CD4-positive, alpha-beta memory T cell (primary cell): ENCODE measurements at regions of chr11 and their contacts with region 1.

Region 1: DNA sequence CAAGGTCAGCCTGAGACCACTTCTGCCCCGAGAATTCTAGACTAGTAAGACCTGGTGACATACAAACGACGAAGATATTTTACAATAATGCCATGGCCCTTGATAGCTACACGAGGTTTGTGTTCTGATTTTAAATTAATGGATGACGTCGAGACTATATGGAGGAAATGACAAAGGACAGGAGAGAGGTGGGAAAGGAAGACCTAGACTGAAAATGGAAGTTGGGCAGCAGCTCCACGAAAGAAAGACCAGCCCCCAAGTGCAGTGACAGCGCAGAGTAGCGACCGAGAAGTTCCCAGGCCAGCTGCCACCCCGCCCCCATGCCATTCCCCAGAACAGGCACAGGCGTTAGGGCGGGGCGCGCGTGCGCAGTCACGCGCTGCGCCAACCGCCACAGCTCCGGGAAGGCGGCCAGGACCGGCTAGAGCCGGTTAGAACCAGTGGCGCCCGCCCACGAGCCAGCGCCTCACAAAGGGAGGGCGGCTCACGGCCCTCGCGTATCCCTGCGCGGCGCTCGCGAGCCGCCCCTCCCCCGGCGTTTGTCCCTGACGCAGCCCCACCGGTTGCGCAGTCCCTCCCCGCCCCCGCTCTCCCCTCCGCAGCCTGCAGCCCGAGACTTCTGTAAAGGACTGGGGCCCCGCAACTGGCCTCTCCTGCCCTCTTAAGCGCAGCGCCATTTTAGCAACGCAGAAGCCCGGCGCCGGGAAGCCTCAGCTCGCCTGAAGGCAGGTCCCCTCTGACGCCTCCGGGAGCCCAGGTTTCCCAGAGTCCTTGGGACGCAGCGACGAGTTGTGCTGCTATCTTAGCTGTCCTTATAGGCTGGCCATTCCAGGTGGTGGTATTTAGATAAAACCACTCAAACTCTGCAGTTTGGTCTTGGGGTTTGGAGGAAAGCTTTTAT is 1.5 kb upstream of the MALAT1 start:
- DNase-seq: peak; percentile 97 to 98 (median 97)
- H3K4me3 ChIP-seq: peak overlapping the region; percentile 96 to 99
- H3K4me3 Mint-ChIP-seq: peak overlapping the region in 1 of 8 donors; percentile 85
- H3K27ac ChIP-seq: peak overlapping the region; percentile 97
- H3K27ac Mint-ChIP-seq: no peak overlapping the region
- H3K4me1 ChIP-seq: peaks cover 16% of the 10 kb centered on the region
- H3K4me1 Mint-ChIP-seq: peaks cover 7 to 41% (median 20%) of the 10 kb centered on the region in 4 donors
- H3K27me3 ChIP-seq: no peaks in the 10 kb centered on the region
- H3K27me3 Mint-ChIP-seq: peaks cover 0 to 3% of the 10 kb centered on the region in 2 donors

Region 2: GRCh38 chr11:65134386-65135253 is 362.8 kb before region 1 on chr11 and contains the start of gene SYVN1:
- CTCF ChIA-PET with region 1: no interaction called
- POLR2A ChIA-PET with region 1: interaction called, 13 read pairs
- intact Hi-C with region 1: no loop called
- DNase-seq: peak; percentile 92 to 95 (median 94)
- H3K4me3 ChIP-seq: peak within 1 kb of the TSS; percentile 68 to 99
- H3K4me3 Mint-ChIP-seq: peak within 1 kb of the TSS; percentile 97 to 100 (median 98)
- H3K27ac ChIP-seq: peak within 1 kb of the TSS; percentile 99
- H3K27ac Mint-ChIP-seq: peak within 1 kb of the TSS; percentile 99 to 100 (median 100)
- H3K4me1 ChIP-seq: peaks cover 30% of the 10 kb centered on the region
- H3K4me1 Mint-ChIP-seq: peaks cover 23 to 48% (median 33%) of the 10 kb centered on the region in 4 donors
- H3K27me3 ChIP-seq: no peaks in the 10 kb centered on the region
- H3K27me3 Mint-ChIP-seq: no peaks in the 10 kb centered on the region
- total RNA-seq, gene SYVN1: 74.0 to 76.5 TPM

Region 3: GRCh38 chr11:65366340-65366773 is 131.0 kb before region 1 on chr11:
- CTCF ChIA-PET with region 1: interaction called, 3 read pairs
- POLR2A ChIA-PET with region 1: interaction called, 12 read pairs
- intact Hi-C with region 1: no loop called
- DNase-seq: peak; percentile 59 to 69 (median 64)
- H3K4me3 ChIP-seq: no peak overlapping the region
- H3K4me3 Mint-ChIP-seq: no peak overlapping the region
- H3K27ac ChIP-seq: no peak overlapping the region
- H3K27ac Mint-ChIP-seq: no peak overlapping the region
- H3K4me1 ChIP-seq: no peaks in the 10 kb centered on the region
- H3K4me1 Mint-ChIP-seq: peaks cover 0 to 3% (median 1%) of the 10 kb centered on the region in 4 donors
- H3K27me3 ChIP-seq: no peaks in the 10 kb centered on the region
- H3K27me3 Mint-ChIP-seq: no peaks in the 10 kb centered on the region

Region 4: DNA sequence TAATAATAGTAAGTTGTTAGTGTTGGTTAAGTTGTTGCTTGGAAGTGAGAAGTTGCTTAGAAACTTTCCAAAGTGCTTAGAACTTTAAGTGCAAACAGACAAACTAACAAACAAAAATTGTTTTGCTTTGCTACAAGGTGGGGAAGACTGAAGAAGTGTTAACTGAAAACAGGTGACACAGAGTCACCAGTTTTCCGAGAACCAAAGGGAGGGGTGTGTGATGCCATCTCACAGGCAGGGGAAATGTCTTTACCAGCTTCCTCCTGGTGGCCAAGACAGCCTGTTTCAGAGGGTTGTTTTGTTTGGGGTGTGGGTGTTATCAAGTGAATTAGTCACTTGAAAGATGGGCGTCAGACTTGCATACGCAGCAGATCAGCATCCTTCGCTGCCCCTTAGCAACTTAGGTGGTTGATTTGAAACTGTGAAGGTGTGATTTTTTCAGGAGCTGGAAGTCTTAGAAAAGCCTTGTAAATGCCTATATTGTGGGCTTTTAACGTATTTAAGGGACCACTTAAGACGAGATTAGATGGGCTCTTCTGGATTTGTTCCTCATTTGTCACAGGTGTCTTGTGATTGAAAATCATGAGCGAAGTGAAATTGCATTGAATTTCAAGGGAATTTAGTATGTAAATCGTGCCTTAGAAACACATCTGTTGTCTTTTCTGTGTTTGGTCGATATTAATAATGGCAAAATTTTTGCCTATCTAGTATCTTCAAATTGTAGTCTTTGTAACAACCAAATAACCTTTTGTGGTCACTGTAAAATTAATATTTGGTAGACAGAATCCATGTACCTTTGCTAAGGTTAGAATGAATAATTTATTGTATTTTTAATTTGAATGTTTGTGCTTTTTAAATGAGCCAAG is 72.1 kb before region 1 on chr11:
- CTCF ChIA-PET with region 1: interaction called, 192 read pairs
- POLR2A ChIA-PET with region 1: interaction called, 3,839 read pairs
- intact Hi-C with region 1: loop called (anchors 1 kb)
- DNase-seq: peak; percentile 87 to 98 (median 94)
- H3K4me3 ChIP-seq: peak overlapping the region; percentile 95 to 99
- H3K4me3 Mint-ChIP-seq: peak overlapping the region; percentile 92 to 97 (median 95)
- H3K27ac ChIP-seq: peak overlapping the region; percentile 98
- H3K27ac Mint-ChIP-seq: peak overlapping the region; percentile 93 to 100 (median 97)
- H3K4me1 ChIP-seq: peaks cover 50% of the 10 kb centered on the region
- H3K4me1 Mint-ChIP-seq: peaks cover 41 to 83% (median 47%) of the 10 kb centered on the region in 4 donors
- H3K27me3 ChIP-seq: no peaks in the 10 kb centered on the region
- H3K27me3 Mint-ChIP-seq: peaks cover 0 to 4% of the 10 kb centered on the region in 2 donors

Region 5: GRCh38 chr11:65471410-65471762 is 26.0 kb before region 1 on chr11:
- CTCF ChIA-PET with region 1: interaction called, 86 read pairs
- POLR2A ChIA-PET with region 1: interaction called, 1,536 read pairs
- intact Hi-C with region 1: loop called (anchors 1 kb)
- DNase-seq: no peak
- H3K4me3 ChIP-seq: no peak overlapping the region
- H3K4me3 Mint-ChIP-seq: peak overlapping the region in 1 of 8 donors; percentile 74
- H3K27ac ChIP-seq: peak overlapping the region; percentile 74
- H3K27ac Mint-ChIP-seq: peak overlapping the region; percentile 88 to 99 (median 98)
- H3K4me1 ChIP-seq: peaks cover 18% of the 10 kb centered on the region
- H3K4me1 Mint-ChIP-seq: peaks cover 12 to 27% (median 22%) of the 10 kb centered on the region in 4 donors
- H3K27me3 ChIP-seq: no peaks in the 10 kb centered on the region
- H3K27me3 Mint-ChIP-seq: no peaks in the 10 kb centered on the region

Region 6: DNA sequence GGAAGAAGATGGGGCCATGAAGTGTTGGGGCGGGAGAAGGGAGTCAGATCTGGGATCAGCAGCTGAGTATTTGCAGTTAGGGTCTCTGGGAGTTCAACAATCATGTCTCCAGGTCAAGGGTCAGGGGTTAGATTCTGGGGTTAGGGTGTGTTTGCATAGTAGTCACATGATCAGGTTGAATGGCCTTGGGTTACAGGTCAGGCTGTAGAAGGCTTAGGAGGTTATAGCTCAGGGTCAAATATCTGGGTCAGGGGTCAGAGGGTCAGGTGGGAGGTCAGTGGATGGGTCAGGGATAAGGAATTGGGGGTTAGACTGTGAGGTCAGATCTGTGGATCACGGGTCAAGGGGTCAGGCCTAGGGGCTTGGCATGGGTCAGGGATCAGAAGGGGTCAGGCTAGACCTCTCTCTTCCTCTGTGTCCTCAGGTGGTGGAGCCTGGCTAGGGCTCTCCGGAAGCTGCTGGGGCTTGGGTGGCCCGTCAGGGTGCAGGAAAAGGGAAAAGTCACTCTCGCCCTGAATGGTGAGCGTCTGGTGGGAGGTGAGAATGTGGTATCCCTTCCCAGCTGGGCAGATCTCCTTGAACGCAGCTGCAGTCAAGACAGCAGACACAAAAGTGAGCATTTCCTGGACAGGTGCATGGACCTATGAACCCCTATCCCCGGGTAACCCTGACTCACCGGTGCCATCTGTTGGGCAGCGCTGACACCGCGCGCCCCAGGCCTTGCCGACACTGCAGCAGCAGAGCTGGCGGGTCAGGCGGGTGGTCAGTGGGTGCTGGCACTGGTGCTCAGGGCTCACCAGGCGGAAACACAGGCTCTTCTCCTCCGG is 54.4 kb after region 1 on chr11:
- CTCF ChIA-PET with region 1: interaction called, 4 read pairs
- POLR2A ChIA-PET with region 1: interaction called, 10 read pairs
- intact Hi-C with region 1: no loop called
- DNase-seq: peak; percentile 56 to 65 (median 61)
- H3K4me3 ChIP-seq: no peak overlapping the region
- H3K4me3 Mint-ChIP-seq: peak overlapping the region in 7 of 8 donors; percentile 17 to 65 (median 50)
- H3K27ac ChIP-seq: no peak overlapping the region
- H3K27ac Mint-ChIP-seq: peak overlapping the region; percentile 77 to 92 (median 89)
- H3K4me1 ChIP-seq: peaks cover 77% of the 10 kb centered on the region
- H3K4me1 Mint-ChIP-seq: peaks cover 47 to 84% (median 66%) of the 10 kb centered on the region in 4 donors
- H3K27me3 ChIP-seq: no peaks in the 10 kb centered on the region
- H3K27me3 Mint-ChIP-seq: no peaks in the 10 kb centered on the region

Region 7: DNA sequence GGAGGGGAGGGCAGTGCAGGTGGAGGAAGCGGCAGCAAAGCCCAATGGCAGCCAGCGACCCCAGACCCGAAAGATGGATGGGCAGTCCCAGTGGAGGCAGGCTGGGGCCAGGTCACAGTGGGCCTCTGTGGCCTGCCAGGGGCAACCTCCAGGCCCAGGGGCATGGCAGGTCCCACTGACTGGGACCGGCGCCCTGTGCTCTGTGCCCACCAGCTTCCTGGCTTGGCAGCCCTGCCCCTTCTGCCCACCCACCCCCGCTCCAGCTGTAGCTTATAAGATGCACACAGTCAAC is 102.5 kb after region 1 on chr11:
- CTCF ChIA-PET with region 1: no interaction called
- POLR2A ChIA-PET with region 1: no interaction called
- intact Hi-C with region 1: no loop called
- DNase-seq: no peak
- H3K4me3 ChIP-seq: no peak overlapping the region
- H3K4me3 Mint-ChIP-seq: no peak overlapping the region
- H3K27ac ChIP-seq: no peak overlapping the region
- H3K27ac Mint-ChIP-seq: no peak overlapping the region
- H3K4me1 ChIP-seq: peaks cover 13% of the 10 kb centered on the region
- H3K4me1 Mint-ChIP-seq: peaks cover 8 to 17% (median 9%) of the 10 kb centered on the region in 4 donors
- H3K27me3 ChIP-seq: no peaks in the 10 kb centered on the region
- H3K27me3 Mint-ChIP-seq: no peaks in the 10 kb centered on the region

Region 8: GRCh38 chr11:65859200-65859811 is 361.9 kb after region 1 on chr11:
- CTCF ChIA-PET with region 1: no interaction called
- POLR2A ChIA-PET with region 1: interaction called, 26 read pairs
- intact Hi-C with region 1: no loop called
- DNase-seq: peak; percentile 89 to 98 (median 92)
- H3K4me3 ChIP-seq: peak overlapping the region; percentile 55 to 81
- H3K4me3 Mint-ChIP-seq: peak overlapping the region; percentile 93 to 99 (median 96)
- H3K27ac ChIP-seq: peak overlapping the region; percentile 85
- H3K27ac Mint-ChIP-seq: peak overlapping the region; percentile 92 to 99 (median 97)
- H3K4me1 ChIP-seq: peaks cover 58% of the 10 kb centered on the region
- H3K4me1 Mint-ChIP-seq: peaks cover 32 to 64% (median 48%) of the 10 kb centered on the region in 4 donors
- H3K27me3 ChIP-seq: no peaks in the 10 kb centered on the region
- H3K27me3 Mint-ChIP-seq: no peaks in the 10 kb centered on the region